Activated CD4-positive, alpha-beta T cell treated with anti-CD3 and anti-CD28 coated beads for 36 hours (primary cell): ENCODE measurements at regions of chr5 and their contacts with region 1.

Region 1: GRCh38 chr5:151164686-151165392 is 7.3 kb upstream of the ANXA6 start:
- DNase-seq: peak; percentile 88
- ATAC-seq: peak; percentile 98
- H3K4me3 Mint-ChIP-seq: no peak overlapping the region
- H3K27ac Mint-ChIP-seq: no peak overlapping the region
- H3K4me1 Mint-ChIP-seq: peaks cover 14% of the 10 kb centered on the region
- H3K27me3 Mint-ChIP-seq: no peaks in the 10 kb centered on the region

Region 2: DNA sequence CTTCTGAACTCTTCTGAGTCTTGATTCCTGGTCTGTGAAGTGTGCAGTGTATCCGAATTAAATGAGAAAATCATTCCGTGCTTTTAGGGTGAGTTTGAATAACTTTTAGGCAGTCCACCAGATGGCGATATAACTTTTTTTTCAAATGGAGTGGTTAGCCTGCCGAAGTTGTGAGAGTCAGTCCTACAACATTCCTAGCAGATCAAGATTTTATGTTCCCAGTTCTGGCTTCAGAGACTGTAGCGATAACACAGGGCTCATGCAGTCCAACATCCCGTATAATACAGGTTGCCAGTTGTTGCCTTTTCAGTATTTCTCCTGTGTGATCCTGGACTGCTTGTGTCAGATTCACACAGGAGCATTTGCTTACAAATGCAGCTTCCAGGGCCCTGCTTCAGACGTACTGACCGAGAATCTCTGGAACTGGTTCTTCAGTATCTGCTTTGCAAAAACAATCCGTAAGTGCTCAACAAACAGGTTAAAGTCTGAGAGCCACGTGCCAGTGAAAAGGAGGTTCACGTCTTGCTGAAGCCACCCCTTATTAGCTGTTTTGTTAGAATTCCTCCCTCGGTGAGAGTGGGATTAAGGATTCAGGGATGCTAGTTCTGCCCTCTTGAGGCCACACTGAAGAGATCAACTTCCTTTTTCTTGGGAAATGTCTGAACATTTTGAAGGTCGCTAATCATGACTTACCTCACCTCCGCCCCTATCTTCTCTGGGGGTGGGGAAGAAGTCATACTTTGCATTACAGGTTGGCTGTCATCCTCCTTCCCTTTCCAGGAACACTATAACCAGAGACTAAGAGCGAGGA is 363.5 kb before region 1 on chr5:
- CTCF ChIA-PET with region 1: interaction called, 4 read pairs
- POLR2A ChIA-PET with region 1: no interaction called
- intact Hi-C with region 1: loop called in 1 of 2 experiments (anchors 5 kb)
- DNase-seq: peak; percentile 26
- ATAC-seq: peak; percentile 78
- H3K4me3 Mint-ChIP-seq: no peak overlapping the region
- H3K27ac Mint-ChIP-seq: no peak overlapping the region
- H3K4me1 Mint-ChIP-seq: peaks cover 22% of the 10 kb centered on the region
- H3K27me3 Mint-ChIP-seq: no peaks in the 10 kb centered on the region

Region 3: DNA sequence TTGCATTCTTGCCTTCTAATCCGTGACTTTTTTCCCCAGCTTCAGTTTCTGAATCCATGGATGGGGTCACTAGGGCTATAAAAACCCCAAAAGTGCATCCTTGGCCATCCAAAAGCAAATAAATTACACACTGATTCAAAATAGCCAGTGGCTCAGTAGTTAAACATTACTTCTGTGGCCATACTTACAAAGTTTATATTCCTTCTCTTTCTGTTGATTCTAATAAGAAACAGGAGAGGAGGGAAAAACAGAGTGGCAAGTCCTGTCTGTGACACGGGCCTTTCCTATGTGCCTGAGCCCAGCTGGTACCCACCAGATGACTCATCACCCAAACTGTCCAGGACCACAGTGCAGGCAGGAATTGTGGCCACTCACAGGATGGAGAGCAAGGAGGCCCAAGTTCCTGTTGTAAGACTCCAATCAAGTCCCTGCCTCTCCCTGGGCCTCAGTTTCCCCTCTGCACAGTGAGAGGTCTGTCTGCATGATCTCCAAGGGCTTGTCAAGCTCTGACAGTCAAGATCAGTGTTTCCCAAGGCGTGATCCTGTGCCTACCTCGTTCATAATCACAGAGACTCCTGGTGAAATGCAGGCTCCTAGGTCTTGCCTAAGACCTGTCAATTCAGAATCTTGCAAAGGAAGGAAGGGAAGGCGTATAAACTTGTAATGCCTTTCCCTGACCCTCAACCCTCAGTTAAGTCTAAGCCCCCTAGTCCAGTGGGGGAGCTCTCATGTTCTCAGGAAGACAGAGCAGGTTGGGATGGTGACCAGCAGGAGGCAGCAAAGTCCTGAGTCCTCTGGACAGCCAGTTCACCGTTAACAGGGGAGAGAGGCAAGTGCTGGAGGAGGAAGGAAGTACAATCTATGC is 113.5 kb before region 1 on chr5:
- CTCF ChIA-PET with region 1: interaction called, 18 read pairs
- POLR2A ChIA-PET with region 1: no interaction called
- intact Hi-C with region 1: loop called in 1 of 2 experiments (anchors 1 kb)
- DNase-seq: peak; percentile 82
- ATAC-seq: peak; percentile 84
- H3K4me3 Mint-ChIP-seq: no peak overlapping the region
- H3K27ac Mint-ChIP-seq: no peak overlapping the region
- H3K4me1 Mint-ChIP-seq: peaks cover 5% of the 10 kb centered on the region
- H3K27me3 Mint-ChIP-seq: no peaks in the 10 kb centered on the region

Region 4: DNA sequence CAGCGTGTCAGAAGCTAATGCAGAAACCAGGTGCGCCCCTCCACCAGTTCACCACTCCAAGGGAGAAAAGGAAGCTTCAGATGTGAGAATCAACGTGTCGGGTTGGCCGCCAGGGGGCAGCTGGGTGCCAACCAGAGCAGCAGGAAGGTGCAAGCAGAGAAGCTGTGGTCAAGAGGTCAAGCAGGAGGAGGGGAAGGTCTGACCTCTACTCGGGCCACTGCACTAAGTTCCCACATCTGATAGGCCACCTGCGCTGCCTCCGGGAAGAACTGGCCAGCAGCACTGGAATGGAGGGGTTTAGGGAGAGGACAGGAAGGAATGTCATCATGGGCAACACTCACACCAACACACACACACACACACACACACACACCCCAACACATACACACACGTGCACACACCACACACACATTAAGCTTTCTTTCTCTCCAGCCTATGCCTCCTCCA is 38.6 kb before region 1 on chr5:
- CTCF ChIA-PET with region 1: interaction called, 685 read pairs
- POLR2A ChIA-PET with region 1: interaction called, 10 read pairs
- intact Hi-C with region 1: loop called (anchors 1 kb)
- DNase-seq: peak; percentile 81
- ATAC-seq: peak; percentile 44
- H3K4me3 Mint-ChIP-seq: no peak overlapping the region
- H3K27ac Mint-ChIP-seq: peak overlapping the region; percentile 62
- H3K4me1 Mint-ChIP-seq: peaks cover 75% of the 10 kb centered on the region
- H3K27me3 Mint-ChIP-seq: no peaks in the 10 kb centered on the region

Region 5: GRCh38 chr5:151183451-151184245 is 18.8 kb after region 1 on chr5:
- CTCF ChIA-PET with region 1: interaction called, 19 read pairs
- POLR2A ChIA-PET with region 1: no interaction called
- intact Hi-C with region 1: no loop called
- DNase-seq: no peak
- ATAC-seq: no peak
- H3K4me3 Mint-ChIP-seq: no peak overlapping the region
- H3K27ac Mint-ChIP-seq: no peak overlapping the region
- H3K4me1 Mint-ChIP-seq: peaks cover 4% of the 10 kb centered on the region
- H3K27me3 Mint-ChIP-seq: no peaks in the 10 kb centered on the region

Region 6: GRCh38 chr5:151239237-151239861 is 74.5 kb after region 1 on chr5:
- CTCF ChIA-PET with region 1: interaction called, 17 read pairs
- POLR2A ChIA-PET with region 1: no interaction called
- intact Hi-C with region 1: loop called in 1 of 2 experiments (anchors 1 kb)
- DNase-seq: peak; percentile 82
- ATAC-seq: peak; percentile 71
- H3K4me3 Mint-ChIP-seq: no peak overlapping the region
- H3K27ac Mint-ChIP-seq: no peak overlapping the region
- H3K4me1 Mint-ChIP-seq: peaks cover 29% of the 10 kb centered on the region
- H3K27me3 Mint-ChIP-seq: no peaks in the 10 kb centered on the region

Region 7: GRCh38 chr5:152288917-152289595 is 1124.2 kb after region 1 on chr5:
- CTCF ChIA-PET with region 1: no interaction called
- POLR2A ChIA-PET with region 1: no interaction called
- intact Hi-C with region 1: no loop called
- DNase-seq: no peak
- ATAC-seq: no peak
- H3K4me3 Mint-ChIP-seq: no peak overlapping the region
- H3K27ac Mint-ChIP-seq: no peak overlapping the region
- H3K4me1 Mint-ChIP-seq: no peaks in the 10 kb centered on the region
- H3K27me3 Mint-ChIP-seq: peaks cover 6% of the 10 kb centered on the region